CD4-positive, alpha-beta memory T cell (primary cell): ENCODE measurements at regions of chr7 and their contacts with region 1.

Region 1: GRCh38 chr7:107150375-107151073 is 18.3 kb upstream of the HBP1 start:
- DNase-seq: peak; percentile 68 to 81 (median 74)
- H3K4me3 ChIP-seq: no peak overlapping the region
- H3K4me3 Mint-ChIP-seq: no peak overlapping the region
- H3K27ac ChIP-seq: no peak overlapping the region
- H3K27ac Mint-ChIP-seq: no peak overlapping the region
- H3K4me1 ChIP-seq: no peaks in the 10 kb centered on the region
- H3K4me1 Mint-ChIP-seq: peaks cover 0 to 2% (median 1%) of the 10 kb centered on the region in 4 donors
- H3K27me3 ChIP-seq: no peaks in the 10 kb centered on the region
- H3K27me3 Mint-ChIP-seq: peaks cover 0 to 2% of the 10 kb centered on the region in 2 donors

Region 2: GRCh38 chr7:106176414-106177299 is 973.9 kb before region 1 on chr7:
- CTCF ChIA-PET with region 1: no interaction called
- POLR2A ChIA-PET with region 1: no interaction called
- intact Hi-C with region 1: loop called (anchors 5 kb)
- DNase-seq: peak; percentile 46 to 58 (median 51)
- H3K4me3 ChIP-seq: no peak overlapping the region
- H3K4me3 Mint-ChIP-seq: no peak overlapping the region
- H3K27ac ChIP-seq: no peak overlapping the region
- H3K27ac Mint-ChIP-seq: peak overlapping the region in 1 of 7 donors; percentile 14
- H3K4me1 ChIP-seq: no peaks in the 10 kb centered on the region
- H3K4me1 Mint-ChIP-seq: peaks cover 0 to 4% (median 3%) of the 10 kb centered on the region in 4 donors
- H3K27me3 ChIP-seq: no peaks in the 10 kb centered on the region
- H3K27me3 Mint-ChIP-seq: peaks cover 3 to 10% of the 10 kb centered on the region in 2 donors

Region 3: DNA sequence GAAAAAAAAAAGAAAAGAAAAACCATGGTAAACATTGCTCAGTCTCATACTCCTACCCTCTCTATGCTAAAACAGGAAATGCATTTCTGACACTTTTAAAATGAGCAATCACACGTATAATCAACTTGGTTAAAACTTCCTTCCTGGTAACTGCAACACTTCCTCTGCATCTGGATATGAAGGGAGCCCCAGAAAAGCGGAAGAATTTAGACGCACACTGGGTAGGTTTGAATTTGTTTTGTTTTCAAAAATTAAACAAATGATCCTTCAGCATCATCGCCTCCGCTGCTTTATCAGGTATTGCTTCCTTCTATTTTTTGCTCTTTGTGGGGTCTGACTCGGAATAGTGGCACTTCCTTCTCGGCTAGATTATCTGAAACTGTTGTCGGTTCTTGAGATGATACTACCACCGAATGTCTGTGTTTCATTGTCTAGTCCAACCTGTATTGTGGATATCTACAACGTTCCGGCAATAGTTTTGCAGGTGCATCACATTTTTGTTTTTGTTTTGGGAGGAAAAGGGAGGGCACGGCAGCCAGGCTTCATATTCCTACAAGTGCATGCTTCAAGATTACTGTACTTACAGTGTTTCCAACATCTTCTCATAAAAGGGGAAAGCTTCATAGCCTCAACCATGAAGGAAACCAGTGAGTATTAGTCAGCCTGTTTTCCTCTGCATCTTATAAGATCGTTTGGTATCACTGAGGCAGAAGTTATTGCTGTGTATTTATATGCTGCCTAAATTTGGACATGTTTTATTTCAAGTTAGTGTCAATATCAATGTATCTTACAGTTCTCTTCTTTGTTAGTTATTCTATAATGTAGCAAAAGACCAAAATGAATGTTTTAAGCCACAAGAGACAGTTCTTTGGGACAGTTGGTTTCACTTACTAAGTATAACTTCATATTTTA is 285.1 kb before region 1 on chr7 and contains the start of gene PIK3CG:
- CTCF ChIA-PET with region 1: interaction called, 13 read pairs
- POLR2A ChIA-PET with region 1: no interaction called
- intact Hi-C with region 1: loop called (anchors 5 kb)
- DNase-seq: peak; percentile 58 to 77 (median 66)
- H3K4me3 ChIP-seq: peak within 1 kb of the TSS; percentile 68 to 83
- H3K4me3 Mint-ChIP-seq: peak within 1 kb of the TSS; percentile 90 to 97 (median 93)
- H3K27ac ChIP-seq: peak within 1 kb of the TSS; percentile 66
- H3K27ac Mint-ChIP-seq: peak within 1 kb of the TSS; percentile 88 to 95 (median 92)
- H3K4me1 ChIP-seq: peaks cover 67% of the 10 kb centered on the region
- H3K4me1 Mint-ChIP-seq: peaks cover 57 to 87% (median 69%) of the 10 kb centered on the region in 4 donors
- H3K27me3 ChIP-seq: no peaks in the 10 kb centered on the region
- H3K27me3 Mint-ChIP-seq: no peaks in the 10 kb centered on the region
- total RNA-seq, gene PIK3CG: 32.3 to 32.6 TPM

Region 4: DNA sequence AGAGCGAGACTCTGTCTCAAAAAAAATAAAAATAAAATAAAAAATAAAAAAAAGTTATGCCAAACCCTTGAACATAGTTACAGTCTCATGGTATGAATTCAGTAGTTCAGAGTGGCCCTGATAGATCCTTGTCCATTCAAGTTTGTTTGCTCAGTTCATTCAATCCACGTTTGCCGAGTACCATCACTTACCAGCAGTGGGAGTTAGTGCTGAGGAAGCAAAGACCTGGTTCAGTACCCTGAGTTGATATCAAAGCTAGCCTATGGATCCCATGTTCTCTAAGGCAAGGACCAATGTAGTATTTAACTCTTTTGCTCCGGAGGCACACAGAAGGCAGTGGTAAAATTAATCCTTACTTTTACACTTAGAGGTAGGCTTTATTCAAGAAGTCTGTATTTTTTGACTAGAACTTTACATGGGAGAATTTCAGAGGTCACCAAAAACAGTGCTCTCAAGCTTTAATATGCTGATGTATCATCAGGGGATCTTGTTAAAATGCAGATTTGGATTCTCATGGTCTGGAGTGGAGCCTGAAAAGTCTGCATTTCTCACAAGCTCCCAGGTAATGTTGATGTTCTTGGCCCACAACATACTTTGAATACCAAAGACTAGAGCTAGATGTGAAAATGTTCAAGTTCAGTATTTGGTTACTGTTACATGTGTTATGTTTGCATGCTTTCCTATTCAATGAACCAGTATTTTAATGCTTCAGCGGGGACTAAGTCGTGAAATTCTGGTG is 19.9 kb before region 1 on chr7:
- CTCF ChIA-PET with region 1: interaction called, 46 read pairs
- POLR2A ChIA-PET with region 1: no interaction called
- intact Hi-C with region 1: no loop called
- DNase-seq: no peak
- H3K4me3 ChIP-seq: no peak overlapping the region
- H3K4me3 Mint-ChIP-seq: no peak overlapping the region
- H3K27ac ChIP-seq: no peak overlapping the region
- H3K27ac Mint-ChIP-seq: no peak overlapping the region
- H3K4me1 ChIP-seq: peaks cover 11% of the 10 kb centered on the region
- H3K4me1 Mint-ChIP-seq: peaks cover 10 to 16% (median 13%) of the 10 kb centered on the region in 4 donors
- H3K27me3 ChIP-seq: no peaks in the 10 kb centered on the region
- H3K27me3 Mint-ChIP-seq: peaks cover 0 to 3% of the 10 kb centered on the region in 2 donors

Region 5: DNA sequence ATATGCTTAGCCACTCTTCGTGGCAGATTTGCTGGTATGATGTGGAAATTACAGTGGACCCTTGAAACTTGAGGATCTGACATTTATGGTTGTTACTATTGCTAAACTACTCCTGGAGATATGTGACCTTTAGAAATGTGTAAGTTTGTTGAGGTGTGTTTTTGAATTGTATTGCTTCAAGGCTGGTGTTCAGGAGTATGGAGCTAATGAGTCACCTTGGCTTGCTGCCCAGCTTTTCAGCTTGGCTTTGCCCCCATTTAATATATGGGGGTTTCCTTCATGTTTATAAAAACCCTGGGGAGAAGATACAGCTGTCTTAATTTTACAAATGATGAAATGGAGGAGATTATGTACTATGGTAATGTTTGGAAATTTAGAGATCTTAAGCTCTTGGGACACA is 29.9 kb after region 1 on chr7:
- CTCF ChIA-PET with region 1: interaction called, 30 read pairs
- POLR2A ChIA-PET with region 1: no interaction called
- intact Hi-C with region 1: no loop called
- DNase-seq: peak in 1 of 5 donors; percentile 78
- H3K4me3 ChIP-seq: no peak overlapping the region
- H3K4me3 Mint-ChIP-seq: peak overlapping the region in 4 of 8 donors; percentile 1 to 59 (median 15)
- H3K27ac ChIP-seq: peak overlapping the region; percentile 13
- H3K27ac Mint-ChIP-seq: peak overlapping the region in 6 of 7 donors; percentile 4 to 80 (median 30)
- H3K4me1 ChIP-seq: peaks cover 41% of the 10 kb centered on the region
- H3K4me1 Mint-ChIP-seq: peaks cover 27 to 61% (median 38%) of the 10 kb centered on the region in 4 donors
- H3K27me3 ChIP-seq: no peaks in the 10 kb centered on the region
- H3K27me3 Mint-ChIP-seq: no peaks in the 10 kb centered on the region

Region 6: DNA sequence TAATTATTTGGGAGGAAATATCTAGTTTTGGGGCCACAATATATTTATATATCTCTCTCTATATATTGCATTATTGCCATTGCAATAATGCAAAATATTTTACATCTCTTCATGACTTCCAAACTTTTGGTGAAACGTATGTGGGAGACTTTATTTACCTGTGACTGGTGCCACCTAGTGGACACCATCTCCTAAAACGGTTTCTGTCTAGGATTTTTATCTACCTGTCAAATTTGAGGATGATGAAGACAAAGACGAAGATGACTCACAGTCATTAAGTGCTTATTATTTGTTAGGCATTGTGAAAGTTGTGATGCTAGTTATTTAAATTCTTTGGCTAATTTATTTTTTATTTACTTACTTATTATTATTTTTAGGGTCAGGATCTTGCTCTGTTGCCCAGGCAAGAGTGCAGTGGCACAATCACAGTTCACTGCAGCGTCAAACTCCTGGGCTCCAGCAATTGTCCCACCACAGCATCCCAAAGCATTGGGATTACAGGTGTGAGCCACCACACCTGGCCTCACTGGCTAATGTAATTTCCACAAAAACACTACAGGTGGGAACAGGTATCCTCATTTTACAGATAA is 574.7 kb after region 1 on chr7:
- CTCF ChIA-PET with region 1: interaction called, 17 read pairs
- POLR2A ChIA-PET with region 1: no interaction called
- intact Hi-C with region 1: loop called (anchors 1 kb)
- DNase-seq: peak; percentile 41 to 54 (median 48)
- H3K4me3 ChIP-seq: no peak overlapping the region
- H3K4me3 Mint-ChIP-seq: no peak overlapping the region
- H3K27ac ChIP-seq: no peak overlapping the region
- H3K27ac Mint-ChIP-seq: no peak overlapping the region
- H3K4me1 ChIP-seq: no peaks in the 10 kb centered on the region
- H3K4me1 Mint-ChIP-seq: peaks cover 0 to 3% (median 0%) of the 10 kb centered on the region in 4 donors
- H3K27me3 ChIP-seq: no peaks in the 10 kb centered on the region
- H3K27me3 Mint-ChIP-seq: peaks cover 0 to 3% of the 10 kb centered on the region in 2 donors